ENCODE measurements at regions of chr2 and their contacts with region 1.

Region 1: GRCh38 chr2:174985630-174986029 is 19.6 kb downstream of the CHN1 start:
- H3K4me3 Mint-ChIP-seq: no peak overlapping the region
- H3K27ac Mint-ChIP-seq: no peak overlapping the region
- H3K4me1 Mint-ChIP-seq: no peaks in the 10 kb centered on the region
- H3K27me3 Mint-ChIP-seq: peaks cover 18% of the 10 kb centered on the region

Region 2: GRCh38 chr2:173386021-173386737 is 1599.5 kb before region 1 on chr2:
- intact Hi-C with region 1: no loop called
- H3K4me3 Mint-ChIP-seq: no peak overlapping the region
- H3K27ac Mint-ChIP-seq: no peak overlapping the region
- H3K4me1 Mint-ChIP-seq: no peaks in the 10 kb centered on the region
- H3K27me3 Mint-ChIP-seq: no peaks in the 10 kb centered on the region

Region 3: GRCh38 chr2:174699993-174700766 is 285.4 kb before region 1 on chr2:
- intact Hi-C with region 1: loop called (anchors 2 kb)
- H3K4me3 Mint-ChIP-seq: no peak overlapping the region
- H3K27ac Mint-ChIP-seq: no peak overlapping the region
- H3K4me1 Mint-ChIP-seq: peaks cover 19% of the 10 kb centered on the region
- H3K27me3 Mint-ChIP-seq: peaks cover 16% of the 10 kb centered on the region

Region 4: DNA sequence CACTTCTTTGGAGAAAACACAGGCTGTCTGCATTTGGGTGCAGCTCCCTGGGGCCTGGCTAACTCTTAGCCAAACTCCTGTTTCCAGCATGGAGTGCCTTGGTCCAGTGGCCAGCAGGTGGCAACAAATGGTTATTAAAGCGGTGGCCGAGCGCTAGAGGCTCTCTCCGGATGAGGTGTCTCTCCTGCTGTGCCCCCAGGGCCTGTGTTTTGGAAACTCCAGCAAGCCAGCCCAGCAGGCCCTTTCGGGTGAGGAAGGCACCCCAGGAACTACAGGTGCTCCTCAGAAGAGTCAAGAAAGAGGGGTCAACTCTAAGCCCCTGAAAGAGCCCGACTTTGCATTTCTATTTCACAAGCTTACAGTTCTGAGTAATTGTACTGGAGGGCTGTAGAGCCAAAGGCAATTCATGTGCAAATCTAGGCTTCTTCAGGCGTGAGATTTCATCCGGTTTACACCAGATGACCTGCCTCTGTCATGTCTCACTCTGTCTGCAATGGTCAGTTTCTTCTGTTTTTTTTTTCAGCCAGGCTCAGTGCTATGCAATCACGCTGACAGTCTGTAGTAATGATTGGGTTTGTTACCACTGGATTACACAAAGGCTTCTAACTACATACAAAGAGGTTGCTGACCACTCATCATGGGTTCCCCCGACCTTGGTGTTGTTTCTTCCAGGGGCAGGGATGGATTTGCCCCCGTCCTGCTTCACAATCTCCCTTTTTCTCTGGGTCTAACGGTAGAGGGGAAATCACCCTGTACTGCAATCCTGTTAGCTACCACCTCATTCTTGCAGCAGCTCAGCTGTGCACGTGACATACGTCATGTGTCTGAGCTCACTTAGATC is 213.8 kb before region 1 on chr2:
- intact Hi-C with region 1: loop called (anchors 2 kb)
- H3K4me3 Mint-ChIP-seq: no peak overlapping the region
- H3K27ac Mint-ChIP-seq: no peak overlapping the region
- H3K4me1 Mint-ChIP-seq: peaks cover 17% of the 10 kb centered on the region
- H3K27me3 Mint-ChIP-seq: peaks cover 26% of the 10 kb centered on the region

Measured in dendritic cell treated with granulocyte-macrophage colony-stimulating factor and Interleukin-4, amounts not matched to agents 40 ng/mL and 50 ng/mL, for 4 days (primary cell).